ENCODE measurements at regions of chr2 and their contacts with region 1.

Region 1: DNA sequence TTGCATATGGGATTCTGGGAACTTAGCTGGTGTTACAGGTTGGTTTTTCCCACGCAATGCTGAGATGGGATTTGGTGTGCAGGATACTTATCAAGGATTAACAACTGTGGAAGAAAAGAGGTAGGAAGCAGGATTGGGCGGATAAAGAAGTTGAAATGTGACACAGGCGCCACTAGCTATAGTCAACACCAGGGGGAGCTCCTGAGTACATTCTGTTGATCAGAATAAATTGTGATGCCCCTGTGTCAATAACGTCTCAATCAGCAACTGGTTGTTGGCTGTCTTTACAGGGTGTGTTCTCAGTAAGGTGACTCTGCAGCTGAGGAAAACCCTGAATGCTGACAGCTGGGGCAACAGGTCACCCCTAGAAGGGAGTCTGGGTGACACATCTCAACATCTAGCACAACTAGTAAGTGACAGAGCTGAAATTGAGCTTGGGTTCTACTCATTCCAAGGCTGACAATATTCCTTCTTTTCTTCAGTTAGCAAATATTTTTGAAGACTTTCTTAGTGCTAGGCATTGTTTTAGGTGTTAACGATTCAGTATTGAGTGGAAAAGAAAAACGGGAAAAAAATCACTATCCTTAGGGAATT is 143.0 kb downstream of the ARL6IP6 start:
- DNase-seq: peak; percentile 39
- ATAC-seq: no peak
- H3K4me3 Mint-ChIP-seq: no peak overlapping the region
- H3K27ac Mint-ChIP-seq: no peak overlapping the region
- H3K4me1 Mint-ChIP-seq: no peaks in the 10 kb centered on the region
- H3K27me3 Mint-ChIP-seq: peaks cover 7% of the 10 kb centered on the region

Region 2: GRCh38 chr2:152875701-152876695 is 14.6 kb after region 1 on chr2:
- CTCF ChIA-PET with region 1: interaction called, 11 read pairs
- POLR2A ChIA-PET with region 1: no interaction called
- intact Hi-C with region 1: no loop called
- DNase-seq: no peak
- ATAC-seq: no peak
- H3K4me3 Mint-ChIP-seq: no peak overlapping the region
- H3K27ac Mint-ChIP-seq: no peak overlapping the region
- H3K4me1 Mint-ChIP-seq: no peaks in the 10 kb centered on the region
- H3K27me3 Mint-ChIP-seq: peaks cover 3% of the 10 kb centered on the region